ENCODE measurements at regions of chr13 and their contacts with region 1.

Region 1: DNA sequence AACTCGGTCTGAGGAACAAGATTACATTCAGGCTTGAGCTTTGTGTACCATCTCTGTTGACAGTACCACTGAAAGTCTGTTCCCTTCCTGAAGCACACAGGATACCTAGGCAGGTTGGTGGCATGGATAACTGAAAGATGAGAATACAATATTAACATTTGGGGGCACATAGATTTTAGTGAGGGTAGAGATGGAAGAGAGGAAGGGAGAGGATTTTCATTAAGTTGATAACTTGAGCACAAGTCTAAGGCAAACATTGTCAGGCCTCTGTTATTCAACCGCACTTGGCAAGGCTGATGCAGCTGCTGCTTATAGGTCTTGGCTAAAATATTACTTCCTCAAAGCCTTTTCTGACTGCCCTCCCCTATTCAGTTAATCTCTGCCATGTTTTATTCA is 10.9 kb downstream of the MIR17HG start:
- DNase-seq: no peak
- H3K4me3 ChIP-seq: no peak overlapping the region
- H3K27ac ChIP-seq: no peak overlapping the region
- H3K4me1 ChIP-seq: no peaks in the 10 kb centered on the region; a peak in 1 of 7 replicates
- H3K27me3 ChIP-seq: no peaks in the 10 kb centered on the region
- CTCF ChIP-seq: no peak
- EP300 ChIP-seq: no peak
- POLR2A ChIP-seq: peak in 1 of 2 experiments; percentile 90; a peak in 1 of 3 replicates
- RAD21 ChIP-seq: no peak

Region 2: GRCh38 chr13:91369441-91369831 is 11.1 kb after region 1 on chr13:
- CTCF ChIA-PET with region 1: interaction called, 5 read pairs
- POLR2A ChIA-PET with region 1: interaction called, 19 read pairs
- DNase-seq: no peak
- H3K4me3 ChIP-seq: no peak overlapping the region
- H3K27ac ChIP-seq: no peak overlapping the region
- H3K4me1 ChIP-seq: no peaks in the 10 kb centered on the region
- H3K27me3 ChIP-seq: no peaks in the 10 kb centered on the region
- CTCF ChIP-seq: no peak
- EP300 ChIP-seq: no peak
- POLR2A ChIP-seq: no peak
- RAD21 ChIP-seq: no peak

Region 3: GRCh38 chr13:91375116-91375729 is 16.8 kb after region 1 on chr13:
- CTCF ChIA-PET with region 1: interaction called, 4 read pairs
- POLR2A ChIA-PET with region 1: interaction called, 19 read pairs
- DNase-seq: no peak
- H3K4me3 ChIP-seq: no peak overlapping the region
- H3K27ac ChIP-seq: no peak overlapping the region
- H3K4me1 ChIP-seq: no peaks in the 10 kb centered on the region; a peak in 2 of 7 replicates
- H3K27me3 ChIP-seq: no peaks in the 10 kb centered on the region
- CTCF ChIP-seq: peak; percentile 40 to 67 (median 58)
- EP300 ChIP-seq: no peak
- POLR2A ChIP-seq: no peak
- RAD21 ChIP-seq: peak; percentile 66 to 71

Region 4: GRCh38 chr13:91398413-91399272 is 40.3 kb after region 1 on chr13 and contains the start of gene GPC5:
- CTCF ChIA-PET with region 1: no interaction called
- POLR2A ChIA-PET with region 1: interaction called, 12 read pairs
- DNase-seq: peak; percentile 33 to 92
- H3K4me3 ChIP-seq: peak within 1 kb of the TSS; percentile 56 to 75 (median 69)
- H3K27ac ChIP-seq: no peak within 1 kb of the TSS
- H3K4me1 ChIP-seq: peaks cover 0 to 1% (median 0%) of the 10 kb centered on the region in 4 experiments; a peak in 3 of 7 replicates
- H3K27me3 ChIP-seq: peaks cover 13 to 37% (median 21%) of the 10 kb centered on the region in 4 experiments
- CTCF ChIP-seq: no peak
- EP300 ChIP-seq: no peak
- POLR2A ChIP-seq: no peak
- RAD21 ChIP-seq: no peak
- total RNA-seq, gene GPC5: 0.20 and 0.23 TPM in 2 replicates

Measured in H1 (cell line).